WTC11 (cell line): ENCODE measurements at regions of chr17 and their contacts with region 1.

Region 1: DNA sequence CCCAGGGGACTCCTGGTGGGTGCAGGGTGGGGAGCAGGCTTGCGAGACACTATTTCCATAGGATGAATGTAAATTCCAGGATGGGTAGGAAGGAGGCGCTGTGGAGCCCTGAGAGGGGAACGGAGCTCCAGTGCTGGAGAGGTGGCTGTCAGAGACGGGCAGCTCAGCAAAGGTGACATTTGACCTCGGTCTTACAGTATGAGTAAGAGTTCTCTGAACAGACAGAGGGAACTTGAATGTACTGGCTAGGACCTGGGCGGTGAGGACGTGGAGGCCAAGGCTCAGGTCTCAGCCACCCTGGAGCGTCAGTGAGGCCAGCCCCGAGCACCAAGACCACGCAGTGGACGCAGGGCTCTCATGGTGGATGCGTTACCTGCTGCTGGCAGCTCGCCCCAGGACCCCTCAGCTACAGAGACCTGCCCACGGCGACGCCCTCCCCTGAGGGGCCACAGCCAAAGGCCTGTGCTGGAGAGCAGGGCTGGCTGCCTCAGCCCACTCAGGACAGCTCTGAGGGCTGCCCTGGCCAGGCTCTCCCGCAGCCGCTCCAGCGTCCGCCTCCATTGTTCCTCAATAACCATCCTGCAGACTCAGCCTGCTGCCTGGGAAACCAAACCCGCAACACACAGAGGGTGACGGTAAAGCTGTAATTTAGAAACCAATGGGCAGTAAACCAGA is 65.9 kb upstream of the TNRC6C start:
- DNase-seq: peak; percentile 84
- ATAC-seq: peak; percentile 88
- H3K4me3 Mint-ChIP-seq: no peak overlapping the region
- H3K27ac Mint-ChIP-seq: no peak overlapping the region
- H3K4me1 Mint-ChIP-seq: peaks cover 18% of the 10 kb centered on the region
- H3K27me3 Mint-ChIP-seq: peaks cover 13% of the 10 kb centered on the region
- CTCF ChIP-seq: peak; percentile 82

Region 2: GRCh38 chr17:77542551-77543490 is 349.8 kb before region 1 on chr17:
- CTCF ChIA-PET with region 1: interaction called, 10 read pairs
- POLR2A ChIA-PET with region 1: no interaction called
- DNase-seq: peak; percentile 86
- ATAC-seq: peak; percentile 84
- H3K4me3 Mint-ChIP-seq: peak overlapping the region; percentile 13; the same call in 1 of the 2 replicates
- H3K27ac Mint-ChIP-seq: no peak overlapping the region
- H3K4me1 Mint-ChIP-seq: peaks cover 49% of the 10 kb centered on the region
- H3K27me3 Mint-ChIP-seq: peaks cover 20% of the 10 kb centered on the region
- CTCF ChIP-seq: no peak; the same call in 1 of the 2 replicates

Region 3: GRCh38 chr17:77863814-77864161 is 28.8 kb before region 1 on chr17:
- CTCF ChIA-PET with region 1: interaction called, 10 read pairs
- POLR2A ChIA-PET with region 1: no interaction called
- DNase-seq: no peak
- ATAC-seq: no peak
- H3K4me3 Mint-ChIP-seq: no peak overlapping the region
- H3K27ac Mint-ChIP-seq: no peak overlapping the region
- H3K4me1 Mint-ChIP-seq: peaks cover 23% of the 10 kb centered on the region
- H3K27me3 Mint-ChIP-seq: no peaks in the 10 kb centered on the region; the same call in 1 of the 2 replicates
- CTCF ChIP-seq: no peak

Region 4: GRCh38 chr17:77907532-77907991 is 15.0 kb after region 1 on chr17:
- CTCF ChIA-PET with region 1: interaction called, 14 read pairs
- POLR2A ChIA-PET with region 1: no interaction called
- DNase-seq: no peak
- ATAC-seq: no peak
- H3K4me3 Mint-ChIP-seq: no peak overlapping the region
- H3K27ac Mint-ChIP-seq: no peak overlapping the region
- H3K4me1 Mint-ChIP-seq: peaks cover 20% of the 10 kb centered on the region
- H3K27me3 Mint-ChIP-seq: no peaks in the 10 kb centered on the region; the same call in 1 of the 2 replicates
- CTCF ChIP-seq: no peak

Region 5: GRCh38 chr17:77924757-77925336 is 32.2 kb after region 1 on chr17:
- CTCF ChIA-PET with region 1: interaction called, 11 read pairs
- POLR2A ChIA-PET with region 1: no interaction called
- DNase-seq: peak; percentile 68
- ATAC-seq: peak; percentile 81
- H3K4me3 Mint-ChIP-seq: peak overlapping the region; percentile 51
- H3K27ac Mint-ChIP-seq: peak overlapping the region; percentile 77; the same call in 1 of the 2 replicates
- H3K4me1 Mint-ChIP-seq: peaks cover 71% of the 10 kb centered on the region
- H3K27me3 Mint-ChIP-seq: peaks cover 13% of the 10 kb centered on the region
- CTCF ChIP-seq: no peak

Region 6: DNA sequence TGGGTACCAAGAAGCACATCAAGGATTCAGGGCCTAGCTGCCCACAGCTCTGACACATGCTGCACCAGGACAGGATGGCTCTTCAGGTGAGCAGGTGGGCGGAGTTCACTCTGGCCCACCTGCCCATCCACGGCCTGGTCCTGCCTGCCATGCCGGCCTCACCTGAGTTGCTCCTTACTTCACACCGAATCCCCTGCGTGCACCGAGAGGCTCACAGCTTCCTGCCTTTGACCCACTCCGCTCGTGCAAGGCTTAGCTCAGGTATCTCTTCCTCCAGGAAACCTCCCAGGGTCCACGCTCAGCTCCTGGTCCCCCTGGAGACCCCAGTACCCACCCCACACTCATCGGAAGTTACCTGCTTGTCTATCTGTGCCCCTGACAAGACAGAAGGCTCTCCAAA is 44.3 kb after region 1 on chr17:
- CTCF ChIA-PET with region 1: no interaction called
- POLR2A ChIA-PET with region 1: no interaction called
- DNase-seq: no peak
- ATAC-seq: 0 out of 2 replicates have a peak, but pooled peaks have one; percentile 13
- H3K4me3 Mint-ChIP-seq: no peak overlapping the region; the same call in 1 of the 2 replicates
- H3K27ac Mint-ChIP-seq: peak overlapping the region; percentile 80
- H3K4me1 Mint-ChIP-seq: peaks cover 43% of the 10 kb centered on the region
- H3K27me3 Mint-ChIP-seq: peaks cover 3% of the 10 kb centered on the region; the same call in 1 of the 2 replicates
- CTCF ChIP-seq: no peak

Region 7: DNA sequence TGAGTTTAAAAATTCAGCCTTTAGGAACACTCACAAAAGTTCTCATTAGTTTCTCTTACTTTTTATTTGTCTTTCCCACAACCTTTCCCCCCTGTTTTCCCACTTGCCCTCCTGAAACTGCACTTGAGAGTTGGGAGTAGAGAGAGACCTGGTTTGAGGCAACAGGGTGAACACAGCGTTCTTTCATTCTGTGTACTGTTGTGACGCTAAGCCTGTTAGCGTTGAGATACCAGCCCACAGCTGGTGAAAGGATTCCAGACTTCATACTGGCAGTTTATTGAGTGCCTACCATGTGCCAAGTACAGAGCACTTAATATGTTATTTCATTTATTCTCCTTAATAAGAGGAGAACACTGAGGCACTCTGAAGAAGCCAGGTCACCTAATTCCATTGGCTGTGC is 76.2 kb after region 1 on chr17:
- CTCF ChIA-PET with region 1: interaction called, 10 read pairs
- POLR2A ChIA-PET with region 1: no interaction called
- DNase-seq: no peak
- ATAC-seq: no peak
- H3K4me3 Mint-ChIP-seq: no peak overlapping the region
- H3K27ac Mint-ChIP-seq: peak overlapping the region; percentile 57; the same call in 1 of the 2 replicates
- H3K4me1 Mint-ChIP-seq: peaks cover 56% of the 10 kb centered on the region
- H3K27me3 Mint-ChIP-seq: no peaks in the 10 kb centered on the region
- CTCF ChIP-seq: no peak

Region 8: GRCh38 chr17:78019367-78019975 is 126.9 kb after region 1 on chr17:
- CTCF ChIA-PET with region 1: interaction called, 41 read pairs
- POLR2A ChIA-PET with region 1: no interaction called
- DNase-seq: no peak
- ATAC-seq: no peak
- H3K4me3 Mint-ChIP-seq: no peak overlapping the region
- H3K27ac Mint-ChIP-seq: peak overlapping the region; percentile 15
- H3K4me1 Mint-ChIP-seq: peaks cover 16% of the 10 kb centered on the region
- H3K27me3 Mint-ChIP-seq: no peaks in the 10 kb centered on the region
- CTCF ChIP-seq: no peak